ENCODE measurements at regions of chr4 and their contacts with region 1.

Region 1: GRCh38 chr4:71732706-71733105 is 51.2 kb downstream of the GC start:
- DNase-seq: peak; percentile 11
- H3K4me3 ChIP-seq: no peak overlapping the region
- H3K27ac ChIP-seq: no peak overlapping the region
- H3K4me1 ChIP-seq: no peaks in the 10 kb centered on the region
- H3K27me3 ChIP-seq: no peaks in the 10 kb centered on the region
- CTCF ChIP-seq: peak; percentile 34 to 57

Region 2: DNA sequence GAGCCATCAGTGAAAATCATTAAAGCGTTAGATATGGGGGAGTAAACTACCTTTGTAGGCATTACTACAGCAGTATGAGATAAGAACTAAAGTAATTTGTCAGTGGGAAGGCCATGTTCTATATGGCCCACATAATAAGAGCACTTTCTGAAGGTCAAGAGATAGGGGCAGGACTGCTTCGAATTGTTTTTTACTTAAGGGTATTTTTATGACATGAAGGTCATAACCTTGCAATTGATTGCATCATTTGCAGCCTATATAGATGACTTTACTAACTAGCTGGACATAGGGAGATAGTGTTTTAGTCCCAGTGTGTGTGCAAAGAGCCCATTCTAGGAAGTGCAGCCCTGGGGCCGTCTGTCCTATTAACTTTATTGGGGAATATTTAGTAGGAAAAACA is 74.8 kb after region 1 on chr4:
- CTCF ChIA-PET with region 1: no interaction called
- dilution Hi-C with region 1: no loop called
- in situ Hi-C with region 1: no loop called
- intact Hi-C with region 1: no loop called
- DNase-seq: no peak
- H3K4me3 ChIP-seq: no peak overlapping the region
- H3K27ac ChIP-seq: no peak overlapping the region
- H3K4me1 ChIP-seq: no peaks in the 10 kb centered on the region
- H3K27me3 ChIP-seq: no peaks in the 10 kb centered on the region
- CTCF ChIP-seq: no peak

Region 3: DNA sequence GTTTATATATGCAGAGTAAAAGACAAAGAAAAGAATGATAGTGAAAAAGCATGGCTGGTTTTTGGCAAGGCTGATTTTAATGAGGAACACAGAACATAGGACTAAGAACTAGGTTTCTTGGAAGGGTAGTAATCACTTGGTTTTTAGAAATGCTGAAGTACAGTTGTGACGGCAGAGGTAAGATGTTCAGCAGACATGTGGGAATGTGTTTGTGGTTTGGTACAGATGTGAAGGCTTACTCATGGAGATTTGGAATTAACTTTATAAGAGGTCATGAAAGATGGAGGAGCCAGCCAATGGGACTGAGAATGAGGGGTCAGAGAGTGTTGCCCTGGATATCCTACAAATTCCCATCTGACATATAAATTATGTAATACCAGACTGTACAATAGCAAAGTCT is 542.7 kb after region 1 on chr4:
- CTCF ChIA-PET with region 1: no interaction called
- dilution Hi-C with region 1: no loop called
- in situ Hi-C with region 1: loop called in 1 of 2 experiments (anchors 10 kb)
- intact Hi-C with region 1: no loop called
- DNase-seq: no peak
- H3K4me3 ChIP-seq: no peak overlapping the region
- H3K27ac ChIP-seq: no peak overlapping the region
- H3K4me1 ChIP-seq: no peaks in the 10 kb centered on the region
- H3K27me3 ChIP-seq: peaks cover 2% of the 10 kb centered on the region
- CTCF ChIP-seq: no peak

Region 4: GRCh38 chr4:72286185-72286584 is 553.5 kb after region 1 on chr4:
- CTCF ChIA-PET with region 1: no interaction called
- dilution Hi-C with region 1: no loop called
- in situ Hi-C with region 1: no loop called
- intact Hi-C with region 1: loop called (anchors 1 kb)
- DNase-seq: peak; percentile 11
- H3K4me3 ChIP-seq: no peak overlapping the region
- H3K27ac ChIP-seq: no peak overlapping the region
- H3K4me1 ChIP-seq: no peaks in the 10 kb centered on the region
- H3K27me3 ChIP-seq: no peaks in the 10 kb centered on the region
- CTCF ChIP-seq: peak; percentile 15 to 37

Measured in mammary epithelial cell (primary cell).